CD4-positive, alpha-beta memory T cell (primary cell): ENCODE measurements at regions of chr13 and their contacts with region 1.

Region 1: GRCh38 chr13:19633479-19634255 is at the start of gene MPHOSPH8:
- DNase-seq: peak; percentile 92 to 93 (median 93)
- H3K4me3 ChIP-seq: peak within 1 kb of the TSS; percentile 71 to 90
- H3K4me3 Mint-ChIP-seq: peak within 1 kb of the TSS; percentile 100
- H3K27ac ChIP-seq: peak within 1 kb of the TSS; percentile 94
- H3K27ac Mint-ChIP-seq: peak within 1 kb of the TSS; percentile 95 to 100 (median 99)
- H3K4me1 ChIP-seq: peaks cover 42% of the 10 kb centered on the region
- H3K4me1 Mint-ChIP-seq: peaks cover 26 to 52% (median 34%) of the 10 kb centered on the region in 4 donors
- H3K27me3 ChIP-seq: no peaks in the 10 kb centered on the region
- H3K27me3 Mint-ChIP-seq: peaks cover 0 to 4% of the 10 kb centered on the region in 2 donors
- total RNA-seq, gene MPHOSPH8: 131 to 136 TPM

Region 2: GRCh38 chr13:19587635-19588300 is 45.9 kb before region 1 on chr13:
- CTCF ChIA-PET with region 1: interaction called, 5 read pairs
- POLR2A ChIA-PET with region 1: interaction called, 8 read pairs
- intact Hi-C with region 1: loop called (anchors 1 kb)
- DNase-seq: peak; percentile 39 to 56 (median 47)
- H3K4me3 ChIP-seq: no peak overlapping the region
- H3K4me3 Mint-ChIP-seq: peak overlapping the region in 7 of 8 donors; percentile 66 to 88 (median 79)
- H3K27ac ChIP-seq: peak overlapping the region; percentile 23
- H3K27ac Mint-ChIP-seq: peak overlapping the region; percentile 80 to 94 (median 84)
- H3K4me1 ChIP-seq: peaks cover 22% of the 10 kb centered on the region
- H3K4me1 Mint-ChIP-seq: peaks cover 19 to 25% (median 23%) of the 10 kb centered on the region in 4 donors
- H3K27me3 ChIP-seq: no peaks in the 10 kb centered on the region
- H3K27me3 Mint-ChIP-seq: no peaks in the 10 kb centered on the region

Region 3: GRCh38 chr13:19782049-19782726 is 148.5 kb after region 1 on chr13:
- CTCF ChIA-PET with region 1: no interaction called
- POLR2A ChIA-PET with region 1: interaction called, 11 read pairs
- intact Hi-C with region 1: loop called (anchors 5 kb)
- DNase-seq: peak; percentile 52 to 57 (median 55)
- H3K4me3 ChIP-seq: peak overlapping the region; percentile 93 to 95
- H3K4me3 Mint-ChIP-seq: peak overlapping the region; percentile 97 to 99 (median 98)
- H3K27ac ChIP-seq: peak overlapping the region; percentile 88
- H3K27ac Mint-ChIP-seq: peak overlapping the region; percentile 98 to 99 (median 99)
- H3K4me1 ChIP-seq: peaks cover 6% of the 10 kb centered on the region
- H3K4me1 Mint-ChIP-seq: peaks cover 2 to 14% (median 5%) of the 10 kb centered on the region in 4 donors
- H3K27me3 ChIP-seq: no peaks in the 10 kb centered on the region
- H3K27me3 Mint-ChIP-seq: no peaks in the 10 kb centered on the region